ENCODE measurements at regions of chr18 and their contacts with region 1.

Region 1: GRCh38 chr18:33231474-33232317 is 208.8 kb downstream of the CCDC178 start:
- DNase-seq: peak; percentile 88
- ATAC-seq: peak; percentile 98
- H3K4me3 Mint-ChIP-seq: no peak overlapping the region
- H3K27ac Mint-ChIP-seq: peak overlapping the region; percentile 86
- H3K4me1 Mint-ChIP-seq: peaks cover 8% of the 10 kb centered on the region
- H3K27me3 Mint-ChIP-seq: no peaks in the 10 kb centered on the region
- CTCF ChIP-seq: peak; percentile 86

Region 2: DNA sequence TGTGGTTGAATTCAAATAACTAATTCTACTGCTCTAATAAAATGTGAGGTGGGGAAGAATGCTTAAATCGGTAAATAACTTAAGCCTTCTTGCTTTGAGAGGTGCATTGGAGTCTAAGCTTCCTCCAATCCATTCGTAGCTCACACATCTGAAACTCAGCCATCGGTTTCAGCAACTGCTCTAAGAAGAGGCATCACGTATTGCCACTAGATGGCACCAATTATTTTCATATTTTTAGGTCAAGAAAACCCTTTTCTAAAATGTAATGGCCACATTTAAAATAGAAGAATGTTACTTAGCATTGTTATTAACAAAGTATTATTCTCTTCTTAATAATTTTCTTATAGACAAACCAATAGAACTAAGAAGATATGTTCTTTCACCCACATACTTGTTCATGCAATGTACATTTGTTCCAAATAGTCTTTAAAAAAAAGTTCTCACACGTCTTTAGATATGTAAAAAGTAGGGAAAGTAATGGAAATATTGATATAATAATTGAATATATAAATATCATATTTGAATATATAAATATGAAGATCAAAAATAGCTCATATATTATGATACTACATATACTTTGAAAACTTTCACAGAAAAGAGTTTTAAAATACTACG is 21.0 kb before region 1 on chr18:
- CTCF ChIA-PET with region 1: interaction called, 28 read pairs
- POLR2A ChIA-PET with region 1: no interaction called
- DNase-seq: no peak
- ATAC-seq: peak; percentile 71
- H3K4me3 Mint-ChIP-seq: no peak overlapping the region
- H3K27ac Mint-ChIP-seq: no peak overlapping the region
- H3K4me1 Mint-ChIP-seq: peaks cover 4% of the 10 kb centered on the region; the same call in 1 of the 2 replicates
- H3K27me3 Mint-ChIP-seq: no peaks in the 10 kb centered on the region
- CTCF ChIP-seq: no peak

Region 3: GRCh38 chr18:33316146-33316587 is 84.5 kb after region 1 on chr18:
- CTCF ChIA-PET with region 1: interaction called, 46 read pairs
- POLR2A ChIA-PET with region 1: no interaction called
- DNase-seq: peak; percentile 78
- ATAC-seq: peak; percentile 99
- H3K4me3 Mint-ChIP-seq: no peak overlapping the region
- H3K27ac Mint-ChIP-seq: no peak overlapping the region
- H3K4me1 Mint-ChIP-seq: no peaks in the 10 kb centered on the region
- H3K27me3 Mint-ChIP-seq: no peaks in the 10 kb centered on the region
- CTCF ChIP-seq: peak; percentile 52; the same call in 1 of the 2 replicates

Region 4: DNA sequence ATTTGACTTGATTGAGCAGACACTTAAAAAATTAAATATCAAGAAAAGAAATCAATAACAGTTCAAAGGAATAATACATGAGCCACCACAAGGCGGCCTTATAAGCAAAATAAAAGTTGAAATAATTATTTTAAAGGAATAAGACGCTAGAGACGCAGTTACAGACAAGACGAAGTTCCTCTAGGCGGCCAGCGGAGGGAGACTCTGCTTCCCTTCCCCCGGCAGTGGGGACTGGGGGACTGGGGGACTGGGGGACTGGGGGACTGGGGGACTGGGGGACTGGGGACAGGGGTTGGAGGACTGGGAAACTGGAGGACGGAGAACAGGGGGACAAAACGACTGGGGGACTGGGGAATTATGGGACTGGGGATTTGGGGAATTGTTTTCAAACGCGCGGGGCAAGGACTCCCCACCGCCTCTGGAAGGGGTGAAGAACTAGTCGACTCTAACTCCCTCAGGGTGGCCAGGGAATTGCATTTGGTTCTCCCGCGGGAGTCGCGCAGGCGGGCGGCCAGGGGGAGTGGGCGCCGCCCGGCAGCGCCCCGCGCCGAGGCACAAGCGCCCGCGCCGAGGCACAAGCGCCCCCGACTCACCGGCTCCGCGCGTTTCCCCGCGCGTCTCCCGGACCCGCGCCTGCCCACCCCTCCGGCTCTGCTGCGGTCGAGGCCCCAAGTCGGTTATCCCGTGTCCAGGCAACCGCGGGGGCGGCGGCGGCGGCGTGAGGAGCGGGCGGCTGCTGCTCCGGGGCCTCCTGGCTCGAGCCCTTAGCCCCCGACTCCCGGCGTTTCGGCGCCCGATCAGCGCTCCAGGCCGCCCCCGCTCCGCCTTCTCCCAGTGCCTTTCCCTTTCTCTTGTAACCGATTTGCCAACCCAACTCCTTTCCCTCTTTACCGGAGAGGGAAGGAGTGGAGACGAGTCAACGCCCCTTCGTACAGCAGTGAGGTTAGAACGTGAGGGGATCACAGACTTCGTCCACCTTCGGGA is 208.7 kb after region 1 on chr18 and contains the start of gene CCDC178:
- CTCF ChIA-PET with region 1: interaction called, 15 read pairs
- POLR2A ChIA-PET with region 1: no interaction called
- DNase-seq: peak; percentile 75
- ATAC-seq: peak; percentile 94
- H3K4me3 Mint-ChIP-seq: peak within 1 kb of the TSS; percentile 99
- H3K27ac Mint-ChIP-seq: no peak within 1 kb of the TSS; the same call in 1 of the 2 replicates
- H3K4me1 Mint-ChIP-seq: no peaks in the 10 kb centered on the region; the same call in 1 of the 2 replicates
- H3K27me3 Mint-ChIP-seq: peaks cover 35% of the 10 kb centered on the region
- CTCF ChIP-seq: no peak
- total RNA-seq, gene CCDC178: 0.20 TPM in 1 of 3 replicates, not detected in the others

Region 5: DNA sequence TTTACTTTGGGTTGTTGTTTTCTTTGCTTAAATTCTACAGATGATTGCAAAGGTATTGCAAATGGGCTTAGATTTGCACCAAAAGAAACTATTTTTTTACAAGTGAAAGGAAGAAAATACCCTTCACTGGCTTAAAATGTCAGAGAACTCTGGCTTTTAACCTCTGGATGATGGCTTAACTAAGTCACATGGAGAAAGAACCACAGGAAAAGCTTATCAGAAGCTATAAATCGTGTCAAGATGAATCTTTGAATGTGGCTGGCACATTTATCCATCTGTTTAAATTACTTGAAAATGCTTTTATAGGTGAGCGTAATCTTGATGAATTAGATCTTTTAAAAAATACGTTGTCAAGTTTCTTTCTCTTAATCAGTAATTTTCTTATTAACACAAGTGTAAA is 240.8 kb after region 1 on chr18:
- CTCF ChIA-PET with region 1: interaction called, 12 read pairs
- POLR2A ChIA-PET with region 1: no interaction called
- DNase-seq: no peak
- ATAC-seq: no peak
- H3K4me3 Mint-ChIP-seq: no peak overlapping the region
- H3K27ac Mint-ChIP-seq: peak overlapping the region; percentile 36; the same call in 1 of the 2 replicates
- H3K4me1 Mint-ChIP-seq: peaks cover 24% of the 10 kb centered on the region
- H3K27me3 Mint-ChIP-seq: no peaks in the 10 kb centered on the region
- CTCF ChIP-seq: no peak

Region 6: DNA sequence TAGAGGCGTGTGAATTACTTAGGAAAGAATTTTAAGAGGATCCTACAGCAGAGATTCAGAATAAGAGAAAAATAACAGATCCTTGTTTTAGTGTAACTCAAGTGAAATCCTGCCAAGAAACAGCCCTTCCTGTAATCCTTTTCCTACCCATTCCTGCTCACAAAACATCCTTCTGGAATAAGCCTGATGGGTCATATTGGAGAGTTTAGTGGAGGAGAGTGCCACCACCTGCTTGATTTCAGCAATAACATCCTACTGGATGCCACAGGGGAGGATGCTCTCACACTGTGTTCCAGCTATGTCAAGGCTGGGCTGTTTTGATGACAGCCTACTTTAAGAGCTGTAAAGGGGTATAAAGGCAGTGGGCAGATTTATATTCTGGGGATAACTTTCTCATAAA is 263.6 kb after region 1 on chr18:
- CTCF ChIA-PET with region 1: interaction called, 38 read pairs
- POLR2A ChIA-PET with region 1: no interaction called
- DNase-seq: peak; percentile 37
- ATAC-seq: peak; percentile 100
- H3K4me3 Mint-ChIP-seq: no peak overlapping the region
- H3K27ac Mint-ChIP-seq: no peak overlapping the region
- H3K4me1 Mint-ChIP-seq: no peaks in the 10 kb centered on the region
- H3K27me3 Mint-ChIP-seq: no peaks in the 10 kb centered on the region
- CTCF ChIP-seq: peak; percentile 50; the same call in 1 of the 2 replicates